PC-9 (cell line): ENCODE measurements at regions of chr3 and their contacts with region 1.

Region 1: DNA sequence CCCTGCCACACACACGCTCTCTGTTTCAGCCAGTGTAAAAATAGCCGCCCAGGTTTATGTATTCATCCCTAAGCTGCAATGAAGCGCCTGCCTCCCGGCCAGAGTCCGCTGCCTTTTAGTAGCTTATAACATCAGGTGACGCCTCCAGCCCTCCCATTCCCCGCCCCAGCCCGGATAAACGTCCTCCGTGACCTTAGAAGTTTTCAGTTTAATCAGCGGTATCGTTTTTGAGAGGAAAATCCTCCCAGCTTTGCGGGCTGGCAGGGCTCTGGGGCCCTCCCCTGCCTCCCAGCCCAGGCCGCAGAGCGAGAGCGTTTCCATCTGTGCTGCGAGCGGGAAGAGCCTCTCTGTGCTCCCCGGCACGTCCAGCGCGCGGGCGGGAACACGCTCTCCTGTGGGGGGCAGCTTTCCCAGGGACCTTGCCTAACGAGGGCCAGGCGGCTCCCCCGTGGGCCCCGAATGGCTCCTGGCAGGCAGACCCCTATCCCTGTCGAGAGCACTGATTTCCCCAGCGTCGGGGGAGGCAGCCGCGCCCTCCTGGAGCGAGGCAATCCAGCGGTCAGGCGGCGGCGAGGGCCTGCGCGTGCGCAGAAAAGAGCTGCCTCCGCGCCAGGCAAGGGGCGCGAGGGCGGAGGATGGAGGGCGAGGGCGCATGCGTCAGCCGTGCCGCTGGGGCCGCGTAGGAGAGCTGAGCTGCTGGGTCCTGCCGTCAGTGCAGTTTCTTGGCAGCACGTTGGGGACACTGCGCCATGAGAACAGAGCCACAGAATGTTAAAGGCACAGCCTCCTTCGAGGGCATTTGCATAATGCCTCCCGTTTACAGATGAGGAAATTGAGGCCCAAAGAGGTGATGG is 71.1 kb downstream of the CCNL1 start:
- DNase-seq: peak; percentile 90 to 97
- H3K4me3 ChIP-seq: peak overlapping the region; percentile 62
- H3K27ac ChIP-seq: peak overlapping the region; percentile 99
- H3K4me1 ChIP-seq: peaks cover 46% of the 10 kb centered on the region
- H3K27me3 ChIP-seq: no peaks in the 10 kb centered on the region
- CTCF ChIP-seq: no peak

Region 2: GRCh38 chr3:155730847-155731246 is 1358.0 kb before region 1 on chr3:
- CTCF ChIA-PET with region 1: no interaction called
- POLR2A ChIA-PET with region 1: interaction called, 36 read pairs
- intact Hi-C with region 1: no loop called
- DNase-seq: peak; percentile 34 to 49
- H3K4me3 ChIP-seq: no peak overlapping the region
- H3K27ac ChIP-seq: no peak overlapping the region
- H3K4me1 ChIP-seq: peaks cover 19% of the 10 kb centered on the region
- H3K27me3 ChIP-seq: no peaks in the 10 kb centered on the region
- CTCF ChIP-seq: no peak

Region 3: GRCh38 chr3:156509189-156510174 is 579.3 kb before region 1 on chr3:
- CTCF ChIA-PET with region 1: no interaction called
- POLR2A ChIA-PET with region 1: no interaction called
- intact Hi-C with region 1: no loop called
- DNase-seq: peak; percentile 9 to 58
- H3K4me3 ChIP-seq: no peak overlapping the region
- H3K27ac ChIP-seq: no peak overlapping the region
- H3K4me1 ChIP-seq: peaks cover 11% of the 10 kb centered on the region
- H3K27me3 ChIP-seq: no peaks in the 10 kb centered on the region
- CTCF ChIP-seq: peak; percentile 88

Region 4: DNA sequence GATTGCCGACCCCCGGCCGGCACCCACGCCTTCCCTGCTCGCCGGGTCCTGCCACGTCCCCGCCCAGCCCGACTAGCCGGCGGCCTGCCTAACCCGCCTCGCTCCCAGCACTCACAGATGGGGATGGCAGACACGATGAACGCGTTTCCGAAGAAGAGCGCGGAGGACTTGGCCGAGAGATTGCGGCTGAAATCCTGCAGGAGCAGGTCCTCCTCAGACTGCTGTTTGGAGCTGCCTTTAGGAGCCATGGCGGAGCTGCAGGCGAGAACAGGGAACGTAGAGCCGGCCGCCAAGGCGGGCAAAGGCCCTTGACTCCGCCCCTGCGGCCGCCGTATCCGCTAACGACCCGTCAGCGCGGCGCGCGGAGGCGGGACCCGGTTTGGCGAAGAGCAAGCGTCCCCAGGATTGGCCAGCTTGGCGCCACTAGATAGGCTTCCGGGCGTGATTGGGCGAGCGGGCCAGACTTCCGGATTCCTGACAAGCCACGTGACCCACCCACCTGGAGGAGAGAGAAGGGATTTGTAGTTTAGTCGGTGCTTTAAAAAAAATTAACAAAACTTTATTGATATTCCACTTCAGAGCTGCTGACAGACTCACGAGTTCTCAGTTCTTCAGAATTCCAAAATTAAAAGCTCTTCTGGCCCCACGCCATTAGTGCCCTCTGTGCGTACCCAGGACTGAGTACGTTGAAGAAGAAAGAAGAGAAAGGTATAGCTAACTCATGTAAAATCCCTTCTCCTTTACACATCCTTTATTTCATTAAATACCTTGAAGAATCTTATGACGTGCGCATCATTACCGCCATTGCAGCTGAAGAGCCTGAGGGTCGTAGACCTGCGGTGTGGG is 533.8 kb before region 1 on chr3 and contains the start of gene SSR3:
- CTCF ChIA-PET with region 1: interaction called, 7 read pairs
- POLR2A ChIA-PET with region 1: interaction called, 3 read pairs
- intact Hi-C with region 1: loop called (anchors 1 kb)
- DNase-seq: peak; percentile 98 to 99
- H3K4me3 ChIP-seq: peak within 1 kb of the TSS; percentile 99
- H3K27ac ChIP-seq: peak within 1 kb of the TSS; percentile 83
- H3K4me1 ChIP-seq: peaks cover 35% of the 10 kb centered on the region
- H3K27me3 ChIP-seq: no peaks in the 10 kb centered on the region
- CTCF ChIP-seq: peak; percentile 19; the same call in 1 of the 2 replicates
- total RNA-seq, gene SSR3: 117 and 152 TPM in 2 replicates

Region 5: GRCh38 chr3:156630081-156630772 is 458.6 kb before region 1 on chr3:
- CTCF ChIA-PET with region 1: no interaction called
- POLR2A ChIA-PET with region 1: interaction called, 4 read pairs
- intact Hi-C with region 1: loop called (anchors 2 kb)
- DNase-seq: peak; percentile 53 to 93
- H3K4me3 ChIP-seq: no peak overlapping the region
- H3K27ac ChIP-seq: peak overlapping the region; percentile 84
- H3K4me1 ChIP-seq: peaks cover 67% of the 10 kb centered on the region
- H3K27me3 ChIP-seq: no peaks in the 10 kb centered on the region
- CTCF ChIP-seq: no peak

Region 6: DNA sequence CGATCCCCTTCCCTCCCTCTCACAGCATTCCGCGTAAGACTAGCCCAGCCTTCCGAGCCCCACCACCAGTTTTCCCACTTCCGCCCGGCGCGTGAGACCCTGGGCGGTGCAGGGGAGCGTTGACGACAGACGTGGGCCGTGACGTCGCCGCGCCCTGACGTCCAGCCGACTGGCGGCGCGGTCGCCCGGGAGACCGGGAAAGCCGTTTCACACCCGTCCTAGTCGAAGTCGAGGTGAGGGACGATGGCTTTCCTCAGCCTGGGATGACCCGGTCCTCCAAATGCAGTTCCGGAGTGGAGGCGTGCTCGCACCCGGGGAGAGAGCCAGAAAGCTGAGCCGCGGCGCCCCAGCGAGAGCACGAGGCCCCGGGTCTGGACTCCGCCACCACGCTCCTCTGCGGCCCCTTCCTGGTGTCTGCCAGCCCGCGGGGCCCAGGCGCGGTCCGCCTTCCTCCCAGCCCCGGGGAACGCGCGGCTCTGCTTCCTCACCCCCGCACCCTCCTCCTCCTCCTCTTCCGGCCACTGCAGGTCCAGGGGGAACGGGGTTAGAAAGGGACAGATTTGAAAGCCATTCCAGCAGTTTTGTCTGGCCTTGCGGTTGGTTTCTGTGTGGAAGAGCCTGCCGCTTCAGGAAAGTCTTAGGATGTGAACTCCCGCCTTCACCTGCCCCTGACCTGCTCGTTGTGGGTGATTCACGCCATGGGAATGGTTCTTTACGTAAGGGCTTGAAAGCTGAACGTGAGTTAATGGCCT is 262.5 kb before region 1 on chr3 and contains the start of gene LEKR1:
- CTCF ChIA-PET with region 1: no interaction called
- POLR2A ChIA-PET with region 1: interaction called, 5 read pairs
- intact Hi-C with region 1: loop called (anchors 1 kb)
- DNase-seq: peak; percentile 91 to 98
- H3K4me3 ChIP-seq: peak within 1 kb of the TSS; percentile 63
- H3K27ac ChIP-seq: peak within 1 kb of the TSS; percentile 100
- H3K4me1 ChIP-seq: peaks cover 26% of the 10 kb centered on the region
- H3K27me3 ChIP-seq: no peaks in the 10 kb centered on the region
- CTCF ChIP-seq: no peak; the same call in 1 of the 2 replicates
- total RNA-seq, gene LEKR1: 3.2 and 3.9 TPM in 2 replicates

Region 7: GRCh38 chr3:156837115-156837514 is 251.7 kb before region 1 on chr3:
- CTCF ChIA-PET with region 1: no interaction called
- POLR2A ChIA-PET with region 1: no interaction called
- intact Hi-C with region 1: no loop called
- DNase-seq: no peak
- H3K4me3 ChIP-seq: no peak overlapping the region
- H3K27ac ChIP-seq: no peak overlapping the region
- H3K4me1 ChIP-seq: no peaks in the 10 kb centered on the region
- H3K27me3 ChIP-seq: no peaks in the 10 kb centered on the region
- CTCF ChIP-seq: no peak

Region 8: DNA sequence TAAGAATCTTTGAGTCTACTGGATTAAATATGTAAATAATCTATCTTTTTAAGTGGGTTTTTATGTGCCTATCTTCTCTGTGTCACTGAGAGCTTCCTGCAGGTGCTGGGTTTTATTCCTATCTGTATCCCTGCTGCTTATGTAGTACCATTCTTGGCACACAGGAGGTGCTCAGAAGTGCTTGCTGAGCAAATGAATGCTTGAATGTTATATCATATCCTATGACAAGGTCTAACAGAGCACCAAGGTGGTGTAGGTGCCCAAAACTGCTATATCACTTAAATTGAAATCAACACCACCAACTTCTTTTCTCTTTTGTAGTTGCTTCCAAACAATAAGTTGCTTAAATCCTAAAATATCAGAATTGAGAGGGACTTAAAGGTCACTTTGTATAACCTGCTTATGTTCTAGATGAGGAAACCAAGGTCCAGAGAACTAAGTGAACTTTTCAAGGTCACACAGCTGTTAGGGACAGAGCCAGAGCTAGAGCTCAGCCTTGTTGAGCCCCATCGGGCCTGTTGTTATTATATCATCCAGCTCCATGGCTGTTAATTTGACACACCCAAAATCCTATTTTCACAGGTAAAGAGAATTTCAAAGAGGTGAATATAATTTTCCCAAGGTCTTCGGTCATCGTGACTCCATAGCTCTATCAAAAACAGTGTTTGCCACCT is 25.1 kb after region 1 on chr3:
- CTCF ChIA-PET with region 1: interaction called, 3 read pairs
- POLR2A ChIA-PET with region 1: interaction called, 31 read pairs
- intact Hi-C with region 1: no loop called
- DNase-seq: no peak
- H3K4me3 ChIP-seq: no peak overlapping the region
- H3K27ac ChIP-seq: no peak overlapping the region
- H3K4me1 ChIP-seq: peaks cover 24% of the 10 kb centered on the region
- H3K27me3 ChIP-seq: no peaks in the 10 kb centered on the region
- CTCF ChIP-seq: 0 out of 2 replicates have a peak, but pooled peaks have one; percentile 25

Region 9: GRCh38 chr3:157122116-157122515 is 33.3 kb after region 1 on chr3:
- CTCF ChIA-PET with region 1: interaction called, 3 read pairs
- POLR2A ChIA-PET with region 1: interaction called, 39 read pairs
- intact Hi-C with region 1: no loop called
- DNase-seq: peak; percentile 57 to 99
- H3K4me3 ChIP-seq: no peak overlapping the region
- H3K27ac ChIP-seq: peak overlapping the region; percentile 73
- H3K4me1 ChIP-seq: peaks cover 65% of the 10 kb centered on the region
- H3K27me3 ChIP-seq: no peaks in the 10 kb centered on the region
- CTCF ChIP-seq: no peak

Region 10: GRCh38 chr3:157369727-157370421 is 281.0 kb after region 1 on chr3:
- CTCF ChIA-PET with region 1: no interaction called
- POLR2A ChIA-PET with region 1: no interaction called
- intact Hi-C with region 1: no loop called
- DNase-seq: no peak
- H3K4me3 ChIP-seq: no peak overlapping the region
- H3K27ac ChIP-seq: no peak overlapping the region
- H3K4me1 ChIP-seq: no peaks in the 10 kb centered on the region
- H3K27me3 ChIP-seq: no peaks in the 10 kb centered on the region
- CTCF ChIP-seq: no peak